Activated CD4-positive, alpha-beta T cell treated with anti-CD3 and anti-CD28 coated beads for 36 hours (primary cell): ENCODE measurements at regions of chr17 and their contacts with region 1.

Region 1: DNA sequence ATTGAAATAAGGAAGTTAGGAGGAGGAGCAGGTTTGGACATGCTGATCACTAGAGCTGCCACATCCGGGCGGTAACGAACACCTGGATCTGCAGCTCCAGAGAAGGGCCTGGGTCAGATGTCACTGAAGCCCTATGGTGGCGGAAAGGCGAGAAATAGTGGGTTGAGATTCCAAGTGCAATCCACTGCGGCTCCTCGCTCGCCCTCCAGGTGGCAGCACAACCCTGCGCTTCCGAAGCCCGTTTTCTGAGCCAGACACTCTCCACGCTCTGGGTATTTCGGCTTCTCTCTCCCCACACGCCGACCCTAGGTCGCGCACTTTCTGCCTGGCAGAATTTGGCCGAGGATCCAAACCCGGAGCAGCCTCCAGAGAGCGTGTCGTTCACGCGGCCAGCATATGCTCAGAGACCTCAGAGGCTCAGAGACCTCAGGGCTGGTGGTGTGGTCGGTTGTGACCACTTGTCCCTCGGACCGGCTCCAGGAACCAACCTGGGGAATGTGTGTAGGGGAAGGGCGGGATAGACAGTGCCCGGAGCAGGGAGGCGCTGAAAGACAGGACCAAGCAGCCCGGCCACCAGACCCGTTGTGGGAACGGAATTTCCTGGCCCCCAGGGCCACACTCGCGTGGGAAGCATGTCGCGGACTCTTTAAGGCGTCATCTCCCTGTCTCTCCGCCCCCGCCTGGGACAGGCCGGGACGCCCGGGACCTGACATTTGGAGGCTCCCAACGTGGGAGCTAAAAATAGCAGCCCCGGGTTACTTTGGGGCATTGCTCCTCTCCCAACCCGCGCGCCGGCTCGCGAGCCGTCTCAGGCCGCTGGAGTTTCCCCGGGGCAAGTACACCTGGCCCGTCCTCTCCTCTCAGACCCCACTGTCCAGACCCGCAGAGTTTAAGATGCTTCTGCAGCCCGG is 744 bp upstream of the SLC2A4 start:
- DNase-seq: peak; percentile 92
- ATAC-seq: peak; percentile 84
- H3K4me3 Mint-ChIP-seq: peak overlapping the region; percentile 70
- H3K27ac Mint-ChIP-seq: no peak overlapping the region
- H3K4me1 Mint-ChIP-seq: peaks cover 21% of the 10 kb centered on the region
- H3K27me3 Mint-ChIP-seq: peaks cover 17% of the 10 kb centered on the region

Region 2: GRCh38 chr17:7191571-7192270 is 89.1 kb before region 1 on chr17:
- CTCF ChIA-PET with region 1: no interaction called
- POLR2A ChIA-PET with region 1: no interaction called
- intact Hi-C with region 1: no loop called
- DNase-seq: peak; percentile 61
- ATAC-seq: peak; percentile 72
- H3K4me3 Mint-ChIP-seq: no peak overlapping the region
- H3K27ac Mint-ChIP-seq: no peak overlapping the region
- H3K4me1 Mint-ChIP-seq: no peaks in the 10 kb centered on the region
- H3K27me3 Mint-ChIP-seq: no peaks in the 10 kb centered on the region

Region 3: DNA sequence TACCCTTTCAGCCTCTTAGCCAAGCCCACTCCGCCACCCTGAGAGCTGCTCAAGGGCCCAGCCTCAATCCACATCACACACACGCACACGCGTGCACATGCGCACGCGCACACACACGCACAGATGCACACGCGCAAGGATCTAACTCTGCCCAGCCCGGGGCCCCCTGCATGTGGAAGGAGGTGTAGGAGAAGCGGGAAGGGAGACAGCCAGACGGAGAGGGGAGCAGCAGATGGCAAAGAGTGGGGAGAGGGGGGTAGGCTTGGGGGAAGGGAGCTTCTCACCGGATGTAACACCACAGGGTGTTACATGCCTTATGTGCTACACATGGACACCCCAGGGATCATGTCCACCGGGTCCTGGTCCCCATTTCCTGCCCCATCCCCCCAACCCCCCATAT is 76.4 kb before region 1 on chr17:
- CTCF ChIA-PET with region 1: no interaction called
- POLR2A ChIA-PET with region 1: no interaction called
- intact Hi-C with region 1: no loop called
- DNase-seq: no peak
- ATAC-seq: peak; percentile 6
- H3K4me3 Mint-ChIP-seq: peak overlapping the region; percentile 75
- H3K27ac Mint-ChIP-seq: peak overlapping the region; percentile 83
- H3K4me1 Mint-ChIP-seq: peaks cover 24% of the 10 kb centered on the region
- H3K27me3 Mint-ChIP-seq: no peaks in the 10 kb centered on the region

Region 4: DNA sequence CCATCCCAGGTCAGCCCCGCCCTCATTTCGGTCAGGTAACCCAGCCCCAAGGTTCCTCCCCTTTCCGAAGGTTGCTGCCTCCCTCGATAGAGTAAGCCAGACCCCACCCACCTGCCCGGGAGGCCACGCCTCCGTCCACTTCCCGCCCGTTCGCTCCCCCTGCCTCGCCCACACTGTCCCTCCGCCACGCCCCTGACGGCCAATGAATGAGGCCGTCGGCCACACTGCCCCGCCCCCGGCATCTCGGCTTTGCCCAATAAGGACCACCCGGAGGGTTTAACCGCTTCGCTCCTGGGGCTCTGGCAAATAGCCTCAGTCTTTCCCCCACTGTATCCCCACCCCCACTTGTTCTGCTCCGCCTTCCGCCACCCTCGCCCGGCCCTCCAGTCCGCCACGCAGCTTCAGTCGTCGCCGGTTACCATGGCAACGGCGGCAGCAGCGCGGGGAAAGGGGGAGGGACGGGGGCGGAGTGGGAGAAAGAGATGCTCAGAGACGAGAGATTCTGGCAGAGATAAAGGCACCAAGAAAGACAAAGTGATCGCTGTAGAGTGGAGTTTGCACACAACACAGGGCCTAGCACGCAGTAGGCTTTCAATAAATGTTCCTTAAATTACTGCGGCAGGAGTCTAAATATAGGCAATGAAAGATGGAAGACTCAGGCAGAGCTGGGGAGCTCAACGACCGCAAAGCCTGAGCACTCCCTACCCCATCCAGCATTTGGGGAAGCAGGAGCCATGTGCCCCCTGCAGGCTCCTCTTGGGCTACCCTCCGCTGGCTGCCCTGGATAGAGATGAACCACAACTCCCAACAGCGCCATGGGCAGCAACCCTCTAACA is 66.3 kb before region 1 on chr17:
- CTCF ChIA-PET with region 1: no interaction called
- POLR2A ChIA-PET with region 1: no interaction called
- intact Hi-C with region 1: loop called in 1 of 2 experiments (anchors 1 kb)
- DNase-seq: peak; percentile 100
- ATAC-seq: peak; percentile 82
- H3K4me3 Mint-ChIP-seq: peak overlapping the region; percentile 81
- H3K27ac Mint-ChIP-seq: peak overlapping the region; percentile 93
- H3K4me1 Mint-ChIP-seq: peaks cover 71% of the 10 kb centered on the region
- H3K27me3 Mint-ChIP-seq: peaks cover 7% of the 10 kb centered on the region

Region 5: GRCh38 chr17:7252176-7253043 is 28.4 kb before region 1 on chr17 and contains the start of gene ELP5:
- CTCF ChIA-PET with region 1: interaction called, 3 read pairs
- POLR2A ChIA-PET with region 1: no interaction called
- intact Hi-C with region 1: loop called in 1 of 2 experiments (anchors 1 kb)
- DNase-seq: peak; percentile 94
- ATAC-seq: peak; percentile 65
- H3K4me3 Mint-ChIP-seq: peak within 1 kb of the TSS; percentile 93
- H3K27ac Mint-ChIP-seq: peak within 1 kb of the TSS; percentile 99
- H3K4me1 Mint-ChIP-seq: peaks cover 40% of the 10 kb centered on the region
- H3K27me3 Mint-ChIP-seq: no peaks in the 10 kb centered on the region
- total RNA-seq, gene ELP5: 58.1 to 62.3 TPM

Region 6: DNA sequence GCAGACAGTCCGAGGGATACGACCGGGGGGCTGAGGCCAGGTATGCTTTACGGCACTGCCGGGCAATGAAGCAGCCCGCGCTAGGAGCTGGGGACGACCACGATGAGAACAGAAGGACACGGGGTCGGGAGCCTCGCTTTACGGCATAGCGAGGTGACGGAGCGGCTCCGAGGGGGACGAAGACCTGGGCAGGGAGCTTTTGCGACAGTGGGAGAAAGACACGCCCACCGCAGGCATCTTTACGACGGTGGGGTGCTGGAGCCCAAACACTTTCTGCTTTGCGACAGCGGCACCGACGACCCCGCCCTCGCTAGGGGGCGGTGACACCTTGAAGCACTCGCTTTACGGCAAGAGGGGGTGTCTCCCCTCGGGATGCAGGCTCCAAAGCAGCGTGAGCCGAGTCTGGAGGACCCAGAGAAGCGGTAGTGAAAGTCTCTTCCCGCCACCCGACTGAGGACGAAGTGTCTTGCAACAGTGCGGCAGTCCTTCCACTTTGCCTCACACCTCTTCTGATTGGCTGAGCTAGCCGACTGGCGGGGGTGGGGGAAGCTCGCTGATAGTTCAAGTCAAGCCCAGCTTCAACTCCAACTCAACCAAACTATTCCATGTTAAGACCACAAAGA is 48.7 kb after region 1 on chr17:
- CTCF ChIA-PET with region 1: interaction called, 3 read pairs
- POLR2A ChIA-PET with region 1: no interaction called
- intact Hi-C with region 1: loop called in 1 of 2 experiments (anchors 1 kb)
- DNase-seq: peak; percentile 98
- ATAC-seq: peak; percentile 69
- H3K4me3 Mint-ChIP-seq: peak overlapping the region; percentile 89
- H3K27ac Mint-ChIP-seq: peak overlapping the region; percentile 96
- H3K4me1 Mint-ChIP-seq: peaks cover 44% of the 10 kb centered on the region
- H3K27me3 Mint-ChIP-seq: no peaks in the 10 kb centered on the region

Region 7: GRCh38 chr17:7394452-7395191 is 113.8 kb after region 1 on chr17 and contains the start of gene PLSCR3:
- CTCF ChIA-PET with region 1: no interaction called
- POLR2A ChIA-PET with region 1: no interaction called
- intact Hi-C with region 1: loop called in 1 of 2 experiments (anchors 1 kb)
- DNase-seq: peak; percentile 90
- ATAC-seq: peak; percentile 86
- H3K4me3 Mint-ChIP-seq: peak within 1 kb of the TSS; percentile 88
- H3K27ac Mint-ChIP-seq: peak within 1 kb of the TSS; percentile 95
- H3K4me1 Mint-ChIP-seq: peaks cover 26% of the 10 kb centered on the region
- H3K27me3 Mint-ChIP-seq: no peaks in the 10 kb centered on the region
- total RNA-seq, gene PLSCR3: 69.3 to 78.9 TPM

Region 8: GRCh38 chr17:7583253-7584109 is 302.7 kb after region 1 on chr17 and contains the start of gene MPDU1:
- CTCF ChIA-PET with region 1: no interaction called
- POLR2A ChIA-PET with region 1: no interaction called
- intact Hi-C with region 1: loop called in 1 of 2 experiments (anchors 1 kb)
- DNase-seq: peak; percentile 98
- ATAC-seq: peak; percentile 77
- H3K4me3 Mint-ChIP-seq: peak within 1 kb of the TSS; percentile 82
- H3K27ac Mint-ChIP-seq: peak within 1 kb of the TSS; percentile 100
- H3K4me1 Mint-ChIP-seq: peaks cover 56% of the 10 kb centered on the region
- H3K27me3 Mint-ChIP-seq: no peaks in the 10 kb centered on the region
- total RNA-seq, gene MPDU1: 51.7 to 77.0 TPM